MCF 10A (cell line): ENCODE measurements at regions of chr7 and their contacts with region 1.

Region 1: GRCh38 chr7:34584526-34584925 is 73.5 kb upstream of the NPSR1 start:
- DNase-seq: no peak
- H3K4me3 Mint-ChIP-seq: no peak overlapping the region
- H3K27ac Mint-ChIP-seq: no peak overlapping the region
- H3K4me1 Mint-ChIP-seq: no peaks in the 10 kb centered on the region
- H3K27me3 Mint-ChIP-seq: no peaks in the 10 kb centered on the region
- CTCF ChIP-seq: no peak

Region 2: DNA sequence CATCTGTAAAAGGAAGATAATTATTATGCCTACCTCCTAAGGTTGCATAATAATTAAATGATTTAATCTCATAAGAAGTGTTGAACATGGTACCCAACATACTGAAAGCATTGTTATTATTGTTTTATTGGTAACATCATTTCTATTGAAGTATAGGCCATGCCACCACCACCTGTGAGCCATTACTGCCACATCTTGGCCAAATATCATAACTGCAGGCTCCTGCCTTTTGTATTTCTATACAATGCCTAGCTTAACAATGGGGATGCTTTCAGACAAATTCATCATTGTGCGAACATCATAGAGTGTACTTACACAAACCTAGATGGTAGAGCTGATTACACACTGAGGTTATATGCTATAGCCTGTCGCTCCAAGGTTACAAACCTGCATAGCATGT is 12.4 kb after region 1 on chr7:
- CTCF ChIA-PET with region 1: interaction called, 10 read pairs
- POLR2A ChIA-PET with region 1: no interaction called
- intact Hi-C with region 1: no loop called
- DNase-seq: peak; percentile 49
- H3K4me3 Mint-ChIP-seq: no peak overlapping the region
- H3K27ac Mint-ChIP-seq: no peak overlapping the region
- H3K4me1 Mint-ChIP-seq: no peaks in the 10 kb centered on the region
- H3K27me3 Mint-ChIP-seq: no peaks in the 10 kb centered on the region
- CTCF ChIP-seq: peak; percentile 63